Activated T-helper 1 cell treated with anti-CD3 and anti-CD28 coated beads, Interleukin-12 subunit alpha, Interleukin-12 subunit beta, Interleukin-2, Interleukin-4 antibody, amounts not matched to agents 30 ng/mL and 10 ng/mL and 1 ng/mL, durations not matched to agents 14 hours and 24 hours and 36 hours (primary cell): ENCODE measurements at regions of chr9 and their contacts with region 1.

Region 1: DNA sequence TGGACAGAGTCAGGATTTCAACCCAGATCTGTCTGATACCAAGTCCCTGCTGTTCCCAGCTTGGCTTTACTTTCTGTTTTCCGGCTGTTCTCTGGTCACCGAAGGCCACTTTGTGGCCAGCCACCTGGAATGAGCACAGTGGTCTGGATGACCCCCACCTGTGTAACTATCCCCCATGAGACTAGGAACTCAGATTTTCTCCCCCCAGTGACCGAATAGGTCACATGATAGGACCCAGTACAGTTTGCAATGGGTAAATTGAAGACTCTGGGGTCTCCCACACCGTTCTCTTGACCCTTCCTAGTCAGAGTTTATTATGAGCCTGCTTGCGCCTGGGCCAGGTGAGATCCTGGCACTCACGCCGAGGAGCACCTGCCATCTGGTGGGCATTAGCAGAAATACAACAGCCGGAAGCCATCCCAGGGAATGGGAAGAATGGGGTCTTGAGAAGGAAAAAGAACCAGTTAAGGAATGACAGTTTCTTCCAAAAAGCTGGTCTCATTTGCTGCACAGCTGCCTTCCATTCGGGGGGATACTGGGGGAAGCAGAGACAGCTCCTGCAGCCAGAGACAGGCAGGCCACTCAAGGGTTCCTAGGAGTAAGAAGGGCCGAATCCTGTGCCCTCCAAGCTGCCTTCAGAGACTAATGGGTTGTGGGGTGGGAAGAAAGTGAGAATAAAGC is 7.1 kb downstream of the PHYHD1 start:
- DNase-seq: peak; percentile 21
- H3K4me3 Mint-ChIP-seq: no peak overlapping the region
- H3K27ac Mint-ChIP-seq: peak overlapping the region; percentile 25
- H3K4me1 Mint-ChIP-seq: peaks cover 14% of the 10 kb centered on the region
- H3K27me3 Mint-ChIP-seq: no peaks in the 10 kb centered on the region

Region 2: DNA sequence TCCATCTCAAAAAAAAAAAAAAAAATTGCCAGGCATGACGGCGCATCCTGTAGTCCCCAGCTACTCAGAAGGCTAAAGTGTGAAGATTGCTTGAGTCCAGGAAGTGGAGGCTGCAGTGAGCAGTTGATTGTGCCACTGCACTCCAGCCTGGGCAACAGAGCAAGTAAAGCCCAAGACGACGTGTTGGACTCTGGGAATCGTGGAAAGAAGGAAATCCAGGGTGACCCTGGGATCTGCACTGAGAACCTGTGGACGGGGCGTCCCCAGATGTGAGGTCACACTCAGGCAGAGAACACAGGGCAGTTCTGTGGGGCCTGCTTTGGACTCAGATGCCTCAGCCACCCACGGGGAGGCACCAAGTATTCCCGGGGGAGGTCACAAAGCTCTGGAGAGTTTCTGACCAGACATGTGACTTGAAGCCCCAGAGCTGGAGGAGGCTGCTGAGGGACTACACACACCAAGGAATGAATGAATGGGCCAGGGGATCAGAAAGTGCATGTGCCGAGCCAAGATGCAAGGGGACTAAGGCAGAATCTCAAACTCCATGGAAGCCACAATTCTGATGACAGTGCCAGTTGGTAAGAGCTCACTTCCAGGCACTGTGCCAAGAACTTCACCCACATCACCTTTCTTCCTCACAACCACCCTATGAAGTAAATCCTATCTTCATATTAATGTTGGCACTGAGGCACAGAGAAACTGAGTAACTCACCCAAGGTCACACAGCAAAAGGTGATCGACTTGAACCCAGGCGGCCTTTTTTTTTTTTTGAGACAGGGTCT is 284.2 kb before region 1 on chr9:
- intact Hi-C with region 1: loop called (anchors 2 kb)
- DNase-seq: no peak
- H3K4me3 Mint-ChIP-seq: no peak overlapping the region
- H3K27ac Mint-ChIP-seq: peak overlapping the region; percentile 21
- H3K4me1 Mint-ChIP-seq: peaks cover 7% of the 10 kb centered on the region
- H3K27me3 Mint-ChIP-seq: no peaks in the 10 kb centered on the region

Region 3: DNA sequence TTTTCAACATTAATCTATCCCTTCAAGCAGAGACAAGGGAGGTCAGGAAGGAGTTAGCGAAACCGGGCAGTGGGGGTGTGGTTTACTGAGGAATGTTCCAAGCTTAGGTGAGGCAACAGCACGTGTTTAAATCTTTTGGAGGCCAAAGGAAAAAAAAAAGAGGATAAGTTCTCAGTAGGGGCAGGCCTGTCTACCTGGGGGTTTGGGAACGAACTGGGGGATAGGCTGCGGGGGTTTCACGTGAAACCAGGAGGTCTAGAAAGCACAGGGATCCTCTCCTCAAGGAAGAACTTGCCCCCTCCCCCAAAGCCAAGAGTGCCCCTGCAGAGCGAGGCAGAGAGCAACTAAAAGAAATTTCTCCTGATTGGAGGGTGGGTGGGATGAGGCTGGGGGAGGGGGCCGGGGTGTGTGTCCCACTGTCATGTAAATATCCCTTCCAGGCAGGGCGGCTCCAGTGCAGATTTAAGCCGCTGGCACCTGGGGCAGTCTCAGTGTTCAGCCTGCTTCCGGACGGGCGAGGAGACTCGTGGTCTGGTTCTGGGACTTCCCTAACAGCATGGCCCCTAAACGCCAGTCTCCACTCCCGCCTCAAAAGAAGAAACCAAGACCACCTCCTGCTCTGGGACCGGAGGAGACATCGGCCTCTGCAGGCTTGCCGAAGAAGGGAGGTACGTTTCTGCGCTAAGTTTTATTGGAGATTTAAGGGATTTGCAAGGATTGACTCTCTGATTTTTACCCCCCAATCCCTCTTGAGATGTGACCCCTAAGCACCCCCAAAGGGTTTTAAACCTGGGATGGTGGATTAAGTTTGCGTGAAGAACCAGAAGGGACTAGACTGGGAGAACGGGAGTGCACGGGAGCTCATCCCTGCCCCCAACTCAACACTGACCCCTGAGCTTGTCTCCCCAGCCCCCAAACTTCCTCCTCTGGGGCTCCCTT is 244.3 kb before region 1 on chr9:
- intact Hi-C with region 1: no loop called
- DNase-seq: no peak
- H3K4me3 Mint-ChIP-seq: peak overlapping the region; percentile 96
- H3K27ac Mint-ChIP-seq: peak overlapping the region; percentile 96
- H3K4me1 Mint-ChIP-seq: peaks cover 48% of the 10 kb centered on the region
- H3K27me3 Mint-ChIP-seq: no peaks in the 10 kb centered on the region

Region 4: GRCh38 chr9:128847803-128848202 is 80.1 kb before region 1 on chr9:
- intact Hi-C with region 1: loop called (anchors 1 kb)
- DNase-seq: no peak
- H3K4me3 Mint-ChIP-seq: no peak overlapping the region
- H3K27ac Mint-ChIP-seq: no peak overlapping the region
- H3K4me1 Mint-ChIP-seq: no peaks in the 10 kb centered on the region
- H3K27me3 Mint-ChIP-seq: no peaks in the 10 kb centered on the region

Region 5: GRCh38 chr9:128863647-128864046 is 64.2 kb before region 1 on chr9:
- intact Hi-C with region 1: loop called (anchors 1 kb)
- DNase-seq: peak; percentile 77
- H3K4me3 Mint-ChIP-seq: no peak overlapping the region
- H3K27ac Mint-ChIP-seq: no peak overlapping the region
- H3K4me1 Mint-ChIP-seq: peaks cover 6% of the 10 kb centered on the region
- H3K27me3 Mint-ChIP-seq: no peaks in the 10 kb centered on the region

Region 6: DNA sequence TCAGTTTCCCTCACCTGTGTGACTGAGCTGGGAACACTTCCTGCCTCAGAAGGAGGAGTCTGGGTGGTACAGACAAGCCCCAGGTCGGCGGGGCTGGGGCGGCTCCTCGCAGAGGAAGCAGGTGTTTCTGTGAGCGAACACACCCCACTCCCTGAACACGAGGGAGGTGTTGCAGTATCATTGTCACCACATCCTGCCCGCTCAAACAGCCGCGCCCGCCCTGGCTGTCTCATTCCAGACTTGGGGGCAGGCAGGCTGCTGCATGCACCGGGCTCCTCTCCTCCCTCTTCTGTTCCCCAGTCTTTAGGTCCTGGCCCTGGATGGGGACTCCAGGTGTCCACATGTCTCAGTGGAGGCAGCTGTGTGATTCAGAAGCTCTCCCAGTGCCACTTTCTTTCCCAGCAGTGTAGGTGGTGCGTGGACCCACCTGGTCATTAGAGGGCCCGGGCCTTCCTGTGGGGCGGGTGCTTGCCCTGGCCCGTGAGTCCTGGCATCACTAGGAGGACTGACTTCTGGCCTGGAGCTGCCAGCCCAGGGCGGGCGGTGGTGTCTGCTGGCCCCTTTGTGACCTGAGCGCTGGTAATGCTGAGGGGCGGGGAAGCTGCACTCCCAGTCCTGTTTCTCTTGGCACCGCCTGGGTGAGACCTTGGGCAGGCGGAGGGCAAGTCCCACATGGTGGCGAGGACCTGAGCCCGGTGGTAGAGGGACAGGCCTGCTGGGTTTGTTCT is 25.4 kb before region 1 on chr9:
- intact Hi-C with region 1: loop called (anchors 2 kb)
- DNase-seq: peak; percentile 83
- H3K4me3 Mint-ChIP-seq: peak overlapping the region; percentile 66
- H3K27ac Mint-ChIP-seq: peak overlapping the region; percentile 96
- H3K4me1 Mint-ChIP-seq: peaks cover 65% of the 10 kb centered on the region
- H3K27me3 Mint-ChIP-seq: no peaks in the 10 kb centered on the region